Caco-2 (cell line): ENCODE measurements at regions of chr6 and their contacts with region 1.

Region 1: DNA sequence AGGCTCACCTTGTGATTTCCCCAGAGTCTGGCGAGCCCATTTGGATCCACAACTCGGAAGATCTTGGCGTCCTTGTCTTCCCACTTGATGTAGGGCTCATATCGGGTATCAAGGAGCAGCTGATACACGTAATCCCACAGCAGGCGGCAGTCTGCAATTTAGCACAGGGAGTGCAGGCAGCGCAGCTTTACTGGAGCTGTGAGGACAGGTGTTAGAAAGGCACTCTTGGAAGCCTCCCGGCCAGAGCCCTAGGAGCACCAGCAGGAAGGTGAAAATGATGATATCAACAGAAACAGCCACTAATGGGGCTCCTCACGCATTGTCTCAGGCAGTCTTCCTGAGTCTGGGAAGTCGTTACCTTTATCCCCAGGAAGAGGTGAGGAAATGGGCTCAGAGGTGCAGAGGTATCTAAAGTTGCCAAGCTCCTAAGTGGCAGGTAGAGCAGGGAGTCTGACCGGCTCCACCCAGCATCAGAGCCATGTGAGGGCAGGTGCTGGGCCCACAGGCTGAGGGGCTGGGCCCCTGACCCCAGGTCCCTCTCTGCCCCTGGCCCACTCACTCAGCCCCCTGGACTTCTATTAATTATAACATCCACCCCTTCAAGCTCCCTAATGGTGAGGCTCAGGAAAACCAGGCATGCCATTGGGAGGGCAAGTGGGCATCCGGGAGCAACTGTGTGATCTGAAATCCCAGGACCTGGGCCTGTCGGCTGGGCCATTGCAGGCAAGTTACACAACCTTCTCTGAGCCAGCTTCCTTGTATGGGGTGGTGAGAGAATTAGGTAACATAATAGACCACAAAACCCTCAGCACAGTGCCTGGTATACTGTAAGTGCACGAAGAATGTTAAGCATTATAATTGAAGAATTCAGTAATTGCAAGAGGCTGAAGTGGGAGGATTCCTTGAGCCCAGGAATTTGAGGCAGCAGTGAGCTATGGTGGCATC is 18.3 kb downstream of the ETV7 start:
- DNase-seq: no peak
- H3K4me3 ChIP-seq: no peak overlapping the region
- H3K4me3 Mint-ChIP-seq: no peak overlapping the region
- H3K27ac Mint-ChIP-seq: no peak overlapping the region
- H3K4me1 ChIP-seq: peaks cover 10% of the 10 kb centered on the region; the same call in 1 of the 2 replicates
- H3K4me1 Mint-ChIP-seq: peaks cover 7% of the 10 kb centered on the region
- H3K27me3 ChIP-seq: no peaks in the 10 kb centered on the region
- H3K27me3 Mint-ChIP-seq: peaks cover 5% of the 10 kb centered on the region
- CTCF ChIP-seq: no peak

Region 2: DNA sequence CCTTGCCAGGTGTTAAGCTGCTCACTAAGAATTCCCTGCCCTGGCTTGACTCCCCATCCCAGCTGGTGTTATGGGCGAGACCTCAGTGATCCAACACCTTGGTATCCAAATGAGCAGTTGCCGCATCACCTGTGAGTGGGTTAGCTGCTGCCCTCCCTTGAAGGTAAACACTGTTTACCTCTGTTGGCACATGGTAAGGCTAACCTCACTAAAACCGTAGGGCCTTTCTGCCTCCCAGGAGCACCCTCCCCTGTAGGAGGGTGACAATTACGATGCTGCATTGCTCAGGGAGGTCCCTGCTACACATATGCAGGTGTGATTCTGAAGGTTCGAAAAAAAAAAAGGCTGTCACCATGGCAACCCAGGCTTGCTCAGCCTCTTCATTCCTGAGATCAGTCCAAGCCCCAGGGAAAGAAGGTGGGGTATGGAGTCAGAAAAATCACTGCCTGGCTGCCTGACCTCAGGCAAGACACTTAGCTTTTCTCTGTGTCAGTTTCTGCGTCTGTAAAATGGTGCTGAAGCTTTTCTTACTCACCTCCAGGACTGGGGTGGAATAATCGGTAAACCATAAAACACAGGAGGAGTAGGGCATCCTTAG is 79.8 kb before region 1 on chr6:
- CTCF ChIA-PET with region 1: no interaction called
- POLR2A ChIA-PET with region 1: no interaction called
- intact Hi-C with region 1: no loop called
- DNase-seq: peak in 1 of 2 experiments; percentile 44
- H3K4me3 ChIP-seq: no peak overlapping the region
- H3K4me3 Mint-ChIP-seq: no peak overlapping the region
- H3K27ac Mint-ChIP-seq: no peak overlapping the region
- H3K4me1 ChIP-seq: peaks cover 17% of the 10 kb centered on the region
- H3K4me1 Mint-ChIP-seq: peaks cover 7% of the 10 kb centered on the region
- H3K27me3 ChIP-seq: no peaks in the 10 kb centered on the region
- H3K27me3 Mint-ChIP-seq: no peaks in the 10 kb centered on the region
- CTCF ChIP-seq: no peak

Region 3: DNA sequence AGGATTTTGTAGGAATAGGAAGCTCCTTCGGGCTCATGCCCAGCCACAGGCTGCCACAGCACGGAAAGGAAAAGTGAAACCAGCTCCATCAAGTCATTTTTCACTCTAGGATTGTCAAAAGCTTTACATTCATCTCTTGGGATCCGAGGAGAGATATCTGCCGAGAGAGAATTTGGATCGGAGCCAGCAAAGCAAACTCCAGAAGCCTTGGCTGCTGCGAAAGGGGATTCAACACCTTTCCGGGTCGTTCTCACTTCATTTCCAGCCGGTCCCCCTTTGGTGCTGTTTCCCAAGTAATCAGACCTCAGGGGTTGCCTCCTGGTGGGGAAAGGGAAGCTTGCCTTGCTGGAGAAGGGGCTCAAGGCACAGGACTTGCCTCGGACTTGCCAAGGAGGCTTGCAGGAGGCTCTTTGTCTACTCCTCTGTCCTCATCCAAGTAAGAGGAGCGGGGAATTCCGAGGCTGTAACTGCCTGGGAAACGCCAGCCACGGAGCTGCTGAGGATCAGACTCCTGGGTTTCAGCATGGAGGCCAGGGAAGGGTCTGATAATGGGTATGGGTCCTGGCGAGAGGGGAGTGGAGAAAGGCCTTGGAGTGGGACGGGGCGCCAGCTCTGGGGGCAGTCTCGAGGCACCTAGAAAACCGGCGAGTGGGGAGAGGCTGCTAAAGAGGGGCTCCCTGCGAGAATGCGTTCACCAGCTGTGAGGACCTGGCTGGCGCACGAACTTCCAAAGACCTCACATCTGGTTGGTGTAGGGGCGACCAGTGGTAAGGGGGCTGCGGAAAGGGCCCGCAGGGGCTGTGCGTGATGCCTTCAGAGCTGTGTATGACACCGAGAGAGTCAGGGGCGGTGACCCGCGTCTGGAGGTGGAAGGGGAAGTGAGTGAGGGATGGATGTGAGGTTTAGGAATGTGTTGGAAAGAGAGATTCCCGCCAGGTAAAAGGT is 17.6 kb after region 1 on chr6:
- CTCF ChIA-PET with region 1: interaction called, 4 read pairs
- POLR2A ChIA-PET with region 1: no interaction called
- intact Hi-C with region 1: loop called (anchors 2 kb)
- DNase-seq: peak in 1 of 2 experiments; percentile 28
- H3K4me3 ChIP-seq: peak overlapping the region; percentile 55
- H3K4me3 Mint-ChIP-seq: peak overlapping the region; percentile 80
- H3K27ac Mint-ChIP-seq: no peak overlapping the region
- H3K4me1 ChIP-seq: no peaks in the 10 kb centered on the region
- H3K4me1 Mint-ChIP-seq: peaks cover 4% of the 10 kb centered on the region
- H3K27me3 ChIP-seq: peaks cover 3% of the 10 kb centered on the region; the same call in 1 of the 2 replicates
- H3K27me3 Mint-ChIP-seq: peaks cover 5% of the 10 kb centered on the region
- CTCF ChIP-seq: no peak